ENCODE measurements at regions of chr2 and their contacts with region 1.

Region 1: DNA sequence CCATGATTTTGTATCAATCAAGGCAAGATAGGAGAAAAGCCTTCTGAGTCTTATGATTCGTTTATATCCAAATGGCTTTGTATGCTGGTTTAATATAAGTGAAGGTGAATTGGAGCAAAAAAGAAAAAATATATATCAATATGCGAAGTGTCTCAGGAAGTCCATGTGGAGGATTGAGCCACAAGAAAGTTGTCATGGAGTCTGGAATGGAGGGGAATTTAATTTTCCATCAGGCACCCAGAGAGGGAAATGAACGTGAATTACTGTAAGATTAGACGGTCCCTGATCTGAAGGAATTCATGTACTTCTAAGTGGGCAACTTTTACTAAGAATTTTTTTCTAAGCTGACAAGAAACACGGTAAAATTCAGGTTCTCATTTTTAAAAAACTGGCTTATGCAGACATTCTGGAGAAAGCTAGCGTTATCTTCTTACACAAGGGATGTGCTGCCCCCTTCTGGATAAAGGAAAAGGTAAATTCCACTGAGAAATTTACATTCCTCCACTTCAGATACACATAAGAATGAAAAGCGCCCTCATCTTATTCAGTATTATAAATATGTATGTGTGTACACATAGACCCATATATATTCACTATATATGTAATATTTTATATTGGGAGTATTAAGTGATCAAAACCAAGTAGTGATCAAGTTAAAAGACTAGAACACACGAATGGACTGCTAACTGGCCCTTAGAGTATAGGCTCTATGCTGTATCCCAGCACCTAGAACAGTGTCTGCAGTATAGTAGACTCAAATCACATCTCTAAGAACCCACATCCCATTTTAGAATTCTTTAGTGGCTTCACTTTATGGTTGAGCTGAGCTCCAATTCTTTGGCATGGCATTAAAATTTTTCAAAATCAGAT is 289.0 kb upstream of the TFPI start:
- DNase-seq: peak; percentile 78
- ATAC-seq: peak; percentile 87
- H3K4me3 ChIP-seq: no peak overlapping the region
- H3K27ac ChIP-seq: no peak overlapping the region
- H3K4me1 ChIP-seq: no peaks in the 10 kb centered on the region
- H3K27me3 ChIP-seq: no peaks in the 10 kb centered on the region; the same call in 1 of the 2 replicates
- CTCF ChIP-seq: peak; percentile 70
- POLR2A ChIP-seq: no peak
- RAD21 ChIP-seq: peak; percentile 83

Region 2: GRCh38 chr2:187499941-187500532 is 343.2 kb before region 1 on chr2:
- CTCF ChIA-PET with region 1: interaction called, 5 read pairs
- POLR2A ChIA-PET with region 1: no interaction called
- dilution Hi-C with region 1: no loop called
- in situ Hi-C with region 1: loop called (anchors 5 kb)
- intact Hi-C with region 1: loop called (anchors 2 kb)
- DNase-seq: peak; percentile 66
- ATAC-seq: peak; percentile 71
- H3K4me3 ChIP-seq: no peak overlapping the region
- H3K27ac ChIP-seq: no peak overlapping the region
- H3K4me1 ChIP-seq: peaks cover 9% of the 10 kb centered on the region
- H3K27me3 ChIP-seq: no peaks in the 10 kb centered on the region
- CTCF ChIP-seq: peak; percentile 94
- POLR2A ChIP-seq: 0 out of 2 replicates have a peak, but pooled peaks have one; percentile 30
- RAD21 ChIP-seq: peak; percentile 96

Region 3: DNA sequence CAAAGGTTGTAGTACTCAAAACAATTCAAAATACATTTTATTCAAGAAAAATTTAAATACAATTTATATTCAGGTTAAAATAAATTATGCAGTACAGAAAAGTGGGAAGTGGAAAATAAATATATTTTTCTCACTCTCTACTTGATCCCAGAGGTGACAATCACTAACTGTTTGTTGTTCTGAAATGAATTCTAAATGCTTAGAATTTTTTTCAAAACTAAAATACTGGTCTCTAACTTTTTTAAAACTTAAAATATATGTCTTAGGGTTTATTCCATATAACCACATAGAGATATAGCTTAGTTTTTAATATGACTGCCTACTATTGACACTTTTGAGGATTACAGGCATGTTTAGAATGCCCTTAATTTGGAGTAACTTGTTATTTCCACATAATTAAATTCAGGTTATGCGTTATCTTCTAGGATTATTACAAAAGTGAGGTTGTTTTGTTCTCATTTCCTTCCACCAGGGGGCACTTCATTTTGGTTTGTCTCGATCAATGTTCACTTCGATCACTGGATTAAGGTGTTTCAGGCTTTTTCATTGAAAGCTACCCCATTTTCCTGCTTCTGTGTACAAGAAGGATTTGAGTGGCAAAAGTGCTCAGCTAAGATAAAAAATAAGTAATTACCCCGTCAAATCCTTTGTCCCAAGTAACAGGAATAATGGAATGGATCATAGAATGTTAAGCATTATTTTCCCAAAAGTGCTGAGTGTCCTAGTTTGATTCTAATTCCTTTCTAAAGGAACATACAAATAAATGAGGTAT is 261.9 kb before region 1 on chr2:
- CTCF ChIA-PET with region 1: interaction called, 7 read pairs
- POLR2A ChIA-PET with region 1: no interaction called
- dilution Hi-C with region 1: no loop called
- in situ Hi-C with region 1: no loop called
- intact Hi-C with region 1: loop called (anchors 1 kb)
- DNase-seq: peak; percentile 52
- ATAC-seq: peak; percentile 31; the same call in 1 of the 2 replicates
- H3K4me3 ChIP-seq: peak overlapping the region; percentile 39
- H3K27ac ChIP-seq: no peak overlapping the region
- H3K4me1 ChIP-seq: peaks cover 5% of the 10 kb centered on the region
- H3K27me3 ChIP-seq: no peaks in the 10 kb centered on the region
- CTCF ChIP-seq: peak; percentile 67
- POLR2A ChIP-seq: no peak
- RAD21 ChIP-seq: peak; percentile 52

Region 4: GRCh38 chr2:187594801-187595200 is 248.4 kb before region 1 on chr2:
- CTCF ChIA-PET with region 1: interaction called, 3 read pairs
- POLR2A ChIA-PET with region 1: no interaction called
- dilution Hi-C with region 1: no loop called
- in situ Hi-C with region 1: no loop called
- intact Hi-C with region 1: loop called (anchors 1 kb)
- DNase-seq: peak; percentile 44
- ATAC-seq: peak; percentile 69
- H3K4me3 ChIP-seq: no peak overlapping the region
- H3K27ac ChIP-seq: no peak overlapping the region
- H3K4me1 ChIP-seq: peaks cover 2% of the 10 kb centered on the region; the same call in 1 of the 2 replicates
- H3K27me3 ChIP-seq: no peaks in the 10 kb centered on the region; the same call in 1 of the 2 replicates
- CTCF ChIP-seq: peak; percentile 49
- POLR2A ChIP-seq: no peak
- RAD21 ChIP-seq: peak; percentile 50

Region 5: GRCh38 chr2:187614756-187615155 is 228.5 kb before region 1 on chr2:
- CTCF ChIA-PET with region 1: interaction called, 3 read pairs
- POLR2A ChIA-PET with region 1: no interaction called
- dilution Hi-C with region 1: no loop called
- in situ Hi-C with region 1: loop called (anchors 10 kb)
- intact Hi-C with region 1: no loop called
- DNase-seq: peak; percentile 58
- ATAC-seq: peak; percentile 75
- H3K4me3 ChIP-seq: no peak overlapping the region
- H3K27ac ChIP-seq: no peak overlapping the region
- H3K4me1 ChIP-seq: peaks cover 2% of the 10 kb centered on the region; the same call in 1 of the 2 replicates
- H3K27me3 ChIP-seq: no peaks in the 10 kb centered on the region
- CTCF ChIP-seq: no peak
- POLR2A ChIP-seq: no peak
- RAD21 ChIP-seq: no peak

Region 6: DNA sequence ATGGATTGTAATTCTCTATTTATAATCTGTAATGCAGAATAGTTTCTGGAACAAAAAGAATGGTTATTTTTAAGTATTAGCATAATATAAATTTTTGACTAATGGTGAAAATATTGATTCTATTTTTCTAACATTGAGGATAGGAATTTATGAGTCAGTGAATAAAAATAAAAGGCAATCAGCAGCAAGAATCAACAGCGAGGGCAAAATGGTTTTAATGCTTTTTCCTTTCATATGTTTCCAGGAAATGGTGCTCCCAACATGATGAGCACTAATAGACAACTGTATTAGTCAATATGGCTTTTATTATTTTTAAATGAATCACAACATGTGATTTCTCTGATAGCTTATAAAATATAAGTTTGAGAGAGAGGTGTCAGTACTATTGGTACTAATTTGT is 198.2 kb before region 1 on chr2:
- CTCF ChIA-PET with region 1: no interaction called
- POLR2A ChIA-PET with region 1: no interaction called
- dilution Hi-C with region 1: no loop called
- in situ Hi-C with region 1: no loop called
- intact Hi-C with region 1: no loop called
- DNase-seq: no peak
- ATAC-seq: no peak
- H3K4me3 ChIP-seq: no peak overlapping the region
- H3K27ac ChIP-seq: no peak overlapping the region
- H3K4me1 ChIP-seq: no peaks in the 10 kb centered on the region
- H3K27me3 ChIP-seq: no peaks in the 10 kb centered on the region
- CTCF ChIP-seq: no peak
- POLR2A ChIP-seq: no peak
- RAD21 ChIP-seq: no peak

Region 7: DNA sequence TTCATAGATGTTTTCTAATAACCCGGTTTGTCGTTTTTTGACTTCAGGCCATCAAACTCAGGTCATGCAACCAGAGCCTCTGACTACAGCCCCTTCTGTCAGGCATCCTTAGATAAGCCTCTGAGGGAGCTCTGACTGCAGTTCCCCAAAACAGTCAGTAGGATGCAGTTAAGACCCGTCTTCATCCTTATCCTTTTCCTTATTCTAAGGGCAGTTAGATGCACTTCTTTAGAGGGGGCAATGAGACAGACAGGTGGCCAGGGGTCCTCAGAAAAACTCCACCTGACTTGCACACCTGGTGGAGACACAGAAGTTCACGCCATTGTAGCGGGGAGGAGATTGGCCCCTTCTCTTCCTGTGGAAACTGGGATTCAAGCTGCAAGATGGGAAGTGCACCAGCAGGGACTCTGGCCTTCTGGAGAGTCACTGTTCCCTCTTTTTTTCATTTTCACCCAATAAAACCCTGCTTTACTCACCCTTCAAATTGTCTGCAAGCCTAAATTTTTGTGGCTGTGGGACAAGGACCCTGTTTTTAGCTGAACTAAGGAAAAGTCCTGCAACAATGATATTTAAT is 184.2 kb before region 1 on chr2:
- CTCF ChIA-PET with region 1: no interaction called
- POLR2A ChIA-PET with region 1: no interaction called
- dilution Hi-C with region 1: no loop called
- in situ Hi-C with region 1: no loop called
- intact Hi-C with region 1: loop called (anchors 5 kb)
- DNase-seq: peak; percentile 45
- ATAC-seq: peak; percentile 87; the same call in 1 of the 2 replicates
- H3K4me3 ChIP-seq: no peak overlapping the region
- H3K27ac ChIP-seq: no peak overlapping the region
- H3K4me1 ChIP-seq: no peaks in the 10 kb centered on the region
- H3K27me3 ChIP-seq: no peaks in the 10 kb centered on the region
- CTCF ChIP-seq: peak; percentile 46
- POLR2A ChIP-seq: no peak
- RAD21 ChIP-seq: peak; percentile 43; the same call in 1 of the 2 replicates

Region 8: GRCh38 chr2:187875261-187876141 is 32.3 kb after region 1 on chr2:
- CTCF ChIA-PET with region 1: no interaction called
- POLR2A ChIA-PET with region 1: no interaction called
- dilution Hi-C with region 1: no loop called
- in situ Hi-C with region 1: no loop called
- intact Hi-C with region 1: no loop called
- DNase-seq: peak; percentile 43
- ATAC-seq: no peak; the same call in 1 of the 2 replicates
- H3K4me3 ChIP-seq: no peak overlapping the region
- H3K27ac ChIP-seq: no peak overlapping the region
- H3K4me1 ChIP-seq: no peaks in the 10 kb centered on the region
- H3K27me3 ChIP-seq: no peaks in the 10 kb centered on the region
- CTCF ChIP-seq: no peak
- POLR2A ChIP-seq: no peak
- RAD21 ChIP-seq: no peak

Region 9: DNA sequence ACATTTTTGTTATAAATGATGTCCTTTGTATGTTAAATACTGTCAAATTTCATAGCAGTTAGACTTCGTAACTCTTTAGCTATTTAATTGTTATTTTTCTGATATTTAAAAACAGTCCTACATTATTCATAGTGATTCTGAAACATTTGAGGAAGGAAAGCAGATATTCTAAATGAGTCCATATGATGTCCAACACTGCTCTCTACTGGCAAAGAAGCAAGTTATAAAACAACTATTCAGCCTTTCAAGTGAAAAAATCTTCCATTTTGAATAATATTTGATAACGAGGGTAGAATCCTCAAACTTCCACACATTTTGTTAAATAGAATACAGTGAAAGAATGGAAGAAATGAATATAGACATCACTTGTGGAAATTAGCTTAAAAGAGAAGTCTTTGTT is 669.2 kb after region 1 on chr2:
- CTCF ChIA-PET with region 1: no interaction called
- POLR2A ChIA-PET with region 1: no interaction called
- dilution Hi-C with region 1: no loop called
- in situ Hi-C with region 1: no loop called
- intact Hi-C with region 1: loop called (anchors 1 kb)
- DNase-seq: peak; percentile 77
- ATAC-seq: peak; percentile 84
- H3K4me3 ChIP-seq: no peak overlapping the region
- H3K27ac ChIP-seq: no peak overlapping the region
- H3K4me1 ChIP-seq: no peaks in the 10 kb centered on the region
- H3K27me3 ChIP-seq: no peaks in the 10 kb centered on the region
- CTCF ChIP-seq: peak; percentile 80
- POLR2A ChIP-seq: peak; percentile 24; the same call in 1 of the 2 replicates
- RAD21 ChIP-seq: peak; percentile 94